ENCODE measurements at regions of chr15 and their contacts with region 1.

Region 1: GRCh38 chr15:84658080-84658787 is at the start of gene NMB:
- H3K4me3 Mint-ChIP-seq: peak within 1 kb of the TSS; percentile 76
- H3K27ac Mint-ChIP-seq: peak within 1 kb of the TSS; percentile 71
- H3K4me1 Mint-ChIP-seq: peaks cover 50% of the 10 kb centered on the region
- H3K27me3 Mint-ChIP-seq: peaks cover 5% of the 10 kb centered on the region

Region 2: GRCh38 chr15:84588053-84588874 is 70.0 kb before region 1 on chr15:
- intact Hi-C with region 1: loop called (anchors 2 kb)
- H3K4me3 Mint-ChIP-seq: peak overlapping the region; percentile 66
- H3K27ac Mint-ChIP-seq: peak overlapping the region; percentile 55
- H3K4me1 Mint-ChIP-seq: peaks cover 9% of the 10 kb centered on the region
- H3K27me3 Mint-ChIP-seq: peaks cover 4% of the 10 kb centered on the region

Region 3: GRCh38 chr15:84600851-84601838 is 57.1 kb before region 1 on chr15 and contains the start of gene ZSCAN2:
- intact Hi-C with region 1: loop called (anchors 2 kb)
- H3K4me3 Mint-ChIP-seq: peak within 1 kb of the TSS; percentile 97
- H3K27ac Mint-ChIP-seq: peak within 1 kb of the TSS; percentile 91
- H3K4me1 Mint-ChIP-seq: peaks cover 67% of the 10 kb centered on the region
- H3K27me3 Mint-ChIP-seq: no peaks in the 10 kb centered on the region

Region 4: DNA sequence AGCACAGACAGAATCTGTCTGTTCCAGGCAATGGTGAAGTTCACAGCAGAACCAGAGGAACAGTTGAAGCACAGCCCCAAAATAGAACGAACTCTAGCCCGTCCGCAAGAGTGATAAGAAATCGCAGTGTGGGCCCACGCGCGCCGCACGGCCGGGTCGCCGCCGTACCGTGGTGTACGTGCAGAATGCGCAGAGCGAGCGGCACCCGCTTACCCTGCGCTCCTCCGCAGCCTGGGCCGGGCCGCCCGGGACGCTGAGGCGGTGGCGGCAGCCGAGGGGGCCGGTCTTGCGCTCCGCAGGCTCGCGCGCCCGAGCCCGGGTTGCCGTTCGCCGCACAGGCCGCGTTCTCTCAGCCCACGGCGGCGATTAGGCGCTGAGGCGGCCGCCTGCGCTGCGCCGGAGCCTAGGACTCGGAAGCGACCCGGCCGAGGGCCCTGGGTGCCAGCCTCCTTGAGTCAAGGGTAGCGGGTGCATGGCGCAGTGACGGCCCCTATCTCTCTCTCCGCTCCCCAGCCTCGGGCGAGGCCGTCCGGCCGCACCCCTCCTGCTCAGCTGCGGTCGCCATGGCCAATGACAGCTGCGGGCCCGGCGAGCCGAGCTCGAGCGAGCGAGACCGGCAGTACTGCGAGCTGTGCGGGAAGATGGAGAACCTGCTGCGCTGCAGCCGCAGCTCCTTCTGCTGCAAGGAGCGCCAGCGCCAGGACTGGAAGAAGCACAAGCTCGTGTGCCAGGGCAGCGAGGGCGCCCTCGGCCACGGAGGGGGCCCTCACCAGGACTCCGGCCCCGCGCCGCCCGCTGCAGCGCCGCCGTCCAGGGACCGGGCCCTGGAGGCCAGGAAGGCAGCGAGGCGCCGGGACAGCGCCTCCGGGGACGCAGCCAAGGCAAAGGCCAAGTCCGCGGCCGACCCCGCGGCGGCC is 24.7 kb before region 1 on chr15:
- intact Hi-C with region 1: loop called (anchors 1 kb)
- H3K4me3 Mint-ChIP-seq: peak overlapping the region; percentile 86
- H3K27ac Mint-ChIP-seq: peak overlapping the region; percentile 83
- H3K4me1 Mint-ChIP-seq: peaks cover 46% of the 10 kb centered on the region
- H3K27me3 Mint-ChIP-seq: no peaks in the 10 kb centered on the region

Region 5: GRCh38 chr15:84716036-84716799 is 58.0 kb after region 1 on chr15 and contains the start of gene SEC11A:
- intact Hi-C with region 1: loop called (anchors 5 kb)
- H3K4me3 Mint-ChIP-seq: peak within 1 kb of the TSS; percentile 91
- H3K27ac Mint-ChIP-seq: peak within 1 kb of the TSS; percentile 96
- H3K4me1 Mint-ChIP-seq: peaks cover 44% of the 10 kb centered on the region
- H3K27me3 Mint-ChIP-seq: no peaks in the 10 kb centered on the region

Region 6: DNA sequence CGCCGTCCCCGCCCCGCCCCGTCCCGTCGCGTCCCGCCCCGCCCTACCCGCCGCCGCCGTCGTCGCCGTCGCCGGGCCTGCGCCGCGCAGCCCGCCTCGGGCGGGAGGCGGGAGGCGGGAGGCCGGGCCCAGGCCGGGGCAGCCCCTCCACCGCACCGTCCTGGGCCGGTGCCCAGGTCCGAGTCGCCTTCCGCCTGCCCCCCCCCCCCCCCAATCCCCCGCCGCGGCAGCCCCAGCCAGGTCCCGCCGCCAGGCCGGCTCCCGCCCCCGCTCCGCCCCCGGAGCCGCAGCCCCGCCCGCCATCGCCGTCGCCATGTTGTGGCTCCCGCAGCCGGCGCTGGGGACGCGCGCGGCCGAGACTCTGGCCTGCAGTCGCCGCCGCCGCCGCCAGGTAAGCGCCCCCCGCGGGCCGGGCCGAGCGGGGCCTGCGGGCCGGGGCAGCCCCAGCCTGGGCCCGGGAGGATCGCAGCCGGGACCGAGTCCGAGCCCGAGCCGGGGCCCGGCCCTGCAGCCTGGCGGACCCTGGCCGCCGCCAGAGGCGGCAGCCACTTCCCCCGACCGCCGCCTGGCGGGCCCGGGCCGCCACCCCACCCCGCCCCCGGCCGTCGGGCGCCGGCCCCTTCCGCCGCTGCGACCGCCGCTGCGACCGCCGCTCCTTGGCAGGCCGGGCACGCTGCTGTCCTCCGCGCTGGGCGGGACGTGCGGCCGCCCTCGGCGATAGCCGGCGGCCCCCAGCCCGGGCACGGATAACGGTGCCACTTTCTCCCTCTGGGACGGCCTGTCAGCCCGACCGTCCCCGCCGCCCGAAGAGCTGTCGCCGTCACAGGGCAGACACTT is 90.3 kb after region 1 on chr15 and contains the start of gene ZNF592:
- intact Hi-C with region 1: loop called (anchors 1 kb)
- H3K4me3 Mint-ChIP-seq: peak within 1 kb of the TSS; percentile 97
- H3K27ac Mint-ChIP-seq: peak within 1 kb of the TSS; percentile 98
- H3K4me1 Mint-ChIP-seq: peaks cover 70% of the 10 kb centered on the region
- H3K27me3 Mint-ChIP-seq: no peaks in the 10 kb centered on the region

Region 7: DNA sequence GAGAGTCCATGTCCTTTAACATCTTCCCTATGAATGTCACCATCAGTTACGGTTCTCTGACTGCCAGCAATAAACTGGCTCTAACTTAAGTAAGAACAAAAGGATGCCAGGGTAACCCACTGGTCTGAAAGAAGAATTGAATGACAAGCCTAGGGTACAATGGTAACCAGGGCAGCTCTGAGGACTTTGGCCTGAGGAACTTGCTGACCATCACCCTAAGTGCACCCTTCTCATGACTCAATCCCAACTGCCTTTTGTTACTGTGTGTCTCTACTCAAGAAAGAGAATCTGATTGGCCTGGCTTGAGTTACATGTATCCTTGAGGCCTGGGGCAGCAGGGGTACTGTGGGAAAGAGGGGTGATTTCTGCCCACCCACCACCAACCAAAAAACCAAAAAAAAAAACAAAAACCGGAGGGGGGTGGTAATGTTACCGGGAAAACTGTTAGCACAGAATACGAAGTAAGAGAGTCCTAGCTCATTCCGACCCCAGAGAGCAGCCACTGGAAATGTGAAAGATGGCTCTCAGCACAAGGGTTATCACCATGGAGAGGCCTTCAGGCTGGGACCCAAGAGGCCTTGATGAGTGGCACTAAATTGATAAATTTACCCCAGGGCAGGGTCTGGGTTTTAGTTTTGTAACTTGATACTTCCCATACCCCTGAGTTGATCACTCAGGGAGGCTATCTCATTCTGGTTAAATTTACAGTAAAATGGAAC is 216.9 kb after region 1 on chr15:
- intact Hi-C with region 1: loop called (anchors 5 kb)
- H3K4me3 Mint-ChIP-seq: no peak overlapping the region
- H3K27ac Mint-ChIP-seq: no peak overlapping the region
- H3K4me1 Mint-ChIP-seq: peaks cover 2% of the 10 kb centered on the region
- H3K27me3 Mint-ChIP-seq: peaks cover 1% of the 10 kb centered on the region